Activated CD8-positive, alpha-beta T cell treated with anti-CD3 and anti-CD28 coated beads, Interleukin-2, amount 10 ng/mL, durations not matched to agents 7 days and 5 days (primary cell): ENCODE measurements at regions of chr5 and their contacts with region 1.

Region 1: DNA sequence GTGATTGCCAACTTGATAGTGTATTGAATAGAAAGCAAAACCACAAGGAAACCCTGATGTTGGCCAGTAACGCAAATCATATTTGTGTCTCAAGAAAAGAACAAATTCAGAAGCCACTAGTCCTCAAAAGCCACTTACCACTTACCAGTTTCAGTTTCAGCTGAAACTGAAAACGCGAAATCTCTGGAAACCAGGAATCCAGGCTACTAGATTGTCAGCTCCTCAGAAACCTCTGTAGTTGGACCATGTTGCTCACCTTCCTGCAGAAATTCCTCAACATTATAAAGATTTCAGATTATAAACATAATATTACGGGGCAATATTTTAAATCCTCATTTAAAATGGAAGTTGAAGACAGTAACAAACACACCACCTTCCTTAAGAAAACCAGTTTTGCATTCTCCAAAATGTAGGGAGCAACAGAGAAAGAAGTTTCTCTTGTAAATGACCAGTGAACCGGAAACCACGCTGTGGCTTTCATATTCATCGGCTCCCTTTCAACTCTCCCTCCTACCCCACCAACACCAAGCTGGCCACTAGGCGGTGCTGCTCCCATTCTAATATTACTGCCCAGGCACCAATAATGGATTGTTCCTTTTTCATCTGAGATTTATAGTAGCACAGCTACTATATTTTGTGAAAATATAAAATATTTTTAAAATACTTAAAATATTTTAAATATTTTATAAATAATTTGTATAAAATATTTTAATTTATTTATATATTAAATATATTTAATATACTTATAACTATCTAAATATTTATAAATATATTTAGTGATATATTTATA is 8.7 kb upstream of the TMED7 start:
- DNase-seq: peak; percentile 92
- ATAC-seq: peak; percentile 95
- H3K4me3 Mint-ChIP-seq: peak overlapping the region; percentile 70
- H3K27ac Mint-ChIP-seq: peak overlapping the region; percentile 46
- H3K4me1 Mint-ChIP-seq: peaks cover 36% of the 10 kb centered on the region
- H3K27me3 Mint-ChIP-seq: peaks cover 43% of the 10 kb centered on the region

Region 2: GRCh38 chr5:115472271-115473025 is 162.1 kb before region 1 on chr5:
- CTCF ChIA-PET with region 1: no interaction called
- POLR2A ChIA-PET with region 1: no interaction called
- DNase-seq: no peak
- ATAC-seq: no peak
- H3K4me3 Mint-ChIP-seq: no peak overlapping the region
- H3K27ac Mint-ChIP-seq: no peak overlapping the region
- H3K4me1 Mint-ChIP-seq: no peaks in the 10 kb centered on the region
- H3K27me3 Mint-ChIP-seq: peaks cover 14% of the 10 kb centered on the region

Region 3: GRCh38 chr5:115507681-115508080 is 126.9 kb before region 1 on chr5:
- CTCF ChIA-PET with region 1: no interaction called
- POLR2A ChIA-PET with region 1: no interaction called
- DNase-seq: no peak
- ATAC-seq: no peak
- H3K4me3 Mint-ChIP-seq: no peak overlapping the region
- H3K27ac Mint-ChIP-seq: no peak overlapping the region
- H3K4me1 Mint-ChIP-seq: no peaks in the 10 kb centered on the region
- H3K27me3 Mint-ChIP-seq: peaks cover 10% of the 10 kb centered on the region

Region 4: GRCh38 chr5:115831163-115831768 is 196.7 kb after region 1 on chr5:
- CTCF ChIA-PET with region 1: interaction called, 14 read pairs
- POLR2A ChIA-PET with region 1: interaction called, 3 read pairs
- DNase-seq: peak; percentile 46
- ATAC-seq: peak; percentile 51
- H3K4me3 Mint-ChIP-seq: no peak overlapping the region
- H3K27ac Mint-ChIP-seq: no peak overlapping the region
- H3K4me1 Mint-ChIP-seq: peaks cover 3% of the 10 kb centered on the region
- H3K27me3 Mint-ChIP-seq: no peaks in the 10 kb centered on the region

Region 5: GRCh38 chr5:116068028-116068632 is 433.6 kb after region 1 on chr5:
- CTCF ChIA-PET with region 1: interaction called, 12 read pairs
- POLR2A ChIA-PET with region 1: no interaction called
- DNase-seq: peak; percentile 62
- ATAC-seq: no peak
- H3K4me3 Mint-ChIP-seq: no peak overlapping the region
- H3K27ac Mint-ChIP-seq: no peak overlapping the region
- H3K4me1 Mint-ChIP-seq: peaks cover 4% of the 10 kb centered on the region
- H3K27me3 Mint-ChIP-seq: peaks cover 34% of the 10 kb centered on the region